GM18951 (cell line): ENCODE measurements at regions of chr22 and their contacts with region 1.

Region 1: GRCh38 chr22:36123673-36124630 is 36.6 kb downstream of the APOL3 start:
- POLR2A ChIP-seq: peak; percentile 31

Region 2: GRCh38 chr22:35601743-35602630 is 522.0 kb before region 1 on chr22:
- in situ Hi-C with region 1: loop called (anchors 25 kb)
- POLR2A ChIP-seq: no peak

Region 3: GRCh38 chr22:35930933-35931332 is 193.0 kb before region 1 on chr22:
- in situ Hi-C with region 1: loop called (anchors 5 kb)
- POLR2A ChIP-seq: no peak

Region 4: GRCh38 chr22:35987487-35987886 is 136.5 kb before region 1 on chr22:
- in situ Hi-C with region 1: no loop called
- POLR2A ChIP-seq: no peak